K562 (cell line): ENCODE measurements at regions of chr7 and their contacts with region 1.

Region 1: DNA sequence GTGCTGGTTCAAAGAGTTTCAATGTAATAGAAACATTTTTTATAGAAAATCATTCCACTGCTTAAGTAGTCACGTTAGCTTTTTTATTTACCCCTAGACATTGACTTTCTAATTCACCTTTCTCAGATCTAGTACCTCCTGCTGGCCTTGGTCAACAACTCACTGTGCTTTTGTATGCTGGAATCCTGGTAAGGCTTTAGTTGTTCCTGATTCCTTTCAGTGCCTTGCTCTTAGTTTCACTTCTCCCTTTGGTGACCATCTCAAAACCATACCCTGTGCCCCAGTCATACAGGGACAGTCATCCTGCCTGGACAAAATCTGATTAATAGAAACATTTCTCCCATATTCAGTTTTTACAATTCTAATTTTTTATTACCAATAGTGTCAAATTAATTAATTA is 130.2 kb downstream of the GPR37 start:
- DNase-seq: no peak
- ATAC-seq: no peak
- H3K4me3 ChIP-seq: no peak overlapping the region
- H3K27ac ChIP-seq: no peak overlapping the region
- H3K4me1 ChIP-seq: no peaks in the 10 kb centered on the region
- H3K27me3 ChIP-seq: no peaks in the 10 kb centered on the region
- CTCF ChIP-seq: no peak
- EP300 ChIP-seq: no peak
- POLR2A ChIP-seq: no peak
- RAD21 ChIP-seq: no peak

Region 2: DNA sequence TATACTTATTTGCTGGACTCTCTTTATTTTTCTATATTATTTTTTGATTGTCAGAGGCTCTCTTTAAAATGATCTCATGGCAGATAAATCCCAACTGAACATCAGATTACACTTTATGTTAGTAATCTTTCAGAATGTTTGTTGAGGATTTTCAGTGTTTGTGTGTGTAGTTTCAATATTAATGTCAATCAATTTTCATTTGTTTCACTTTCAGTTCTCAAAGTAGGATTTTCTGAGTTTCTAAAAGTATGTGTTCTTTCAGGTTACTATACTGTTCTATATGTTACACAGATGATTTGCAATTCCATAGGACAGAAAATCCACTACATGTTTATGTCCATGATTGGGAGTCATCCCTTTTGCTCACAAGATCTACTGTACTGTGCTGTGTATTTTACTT is 606.1 kb after region 1 on chr7:
- CTCF ChIA-PET with region 1: no interaction called
- POLR2A ChIA-PET with region 1: no interaction called
- in situ Hi-C with region 1: no loop called
- intact Hi-C with region 1: loop called (anchors 10 kb)
- DNase-seq: no peak
- ATAC-seq: no peak
- H3K4me3 ChIP-seq: no peak overlapping the region
- H3K27ac ChIP-seq: no peak overlapping the region
- H3K4me1 ChIP-seq: no peaks in the 10 kb centered on the region
- H3K27me3 ChIP-seq: no peaks in the 10 kb centered on the region
- CTCF ChIP-seq: no peak
- EP300 ChIP-seq: no peak
- POLR2A ChIP-seq: no peak
- RAD21 ChIP-seq: no peak